ENCODE measurements at regions of chr9 and their contacts with region 1.

Region 1: DNA sequence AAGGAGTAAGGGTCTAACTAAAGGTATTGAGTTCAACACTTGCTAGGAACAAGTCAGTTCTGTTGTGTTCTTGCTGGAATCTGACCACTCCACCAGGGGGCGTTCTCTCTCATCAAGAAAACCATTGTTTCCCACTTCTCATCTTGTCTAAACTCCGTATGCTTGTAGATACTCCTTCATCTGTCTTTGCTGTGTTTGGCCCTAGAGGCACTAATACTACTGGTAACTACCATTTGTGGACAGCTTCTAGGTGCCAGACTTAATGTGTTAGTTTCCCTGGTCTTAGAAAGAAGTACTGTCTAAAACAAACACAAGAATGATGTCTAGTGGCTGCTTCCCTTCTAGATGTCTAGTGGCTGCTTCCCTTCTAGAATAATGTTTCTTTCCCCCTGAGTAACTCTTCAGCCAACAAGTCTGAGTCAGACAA is 18.7 kb upstream of the PTPDC1 start:
- DNase-seq: no peak
- H3K4me3 ChIP-seq: no peak overlapping the region
- CTCF ChIP-seq: peak; percentile 78

Region 2: DNA sequence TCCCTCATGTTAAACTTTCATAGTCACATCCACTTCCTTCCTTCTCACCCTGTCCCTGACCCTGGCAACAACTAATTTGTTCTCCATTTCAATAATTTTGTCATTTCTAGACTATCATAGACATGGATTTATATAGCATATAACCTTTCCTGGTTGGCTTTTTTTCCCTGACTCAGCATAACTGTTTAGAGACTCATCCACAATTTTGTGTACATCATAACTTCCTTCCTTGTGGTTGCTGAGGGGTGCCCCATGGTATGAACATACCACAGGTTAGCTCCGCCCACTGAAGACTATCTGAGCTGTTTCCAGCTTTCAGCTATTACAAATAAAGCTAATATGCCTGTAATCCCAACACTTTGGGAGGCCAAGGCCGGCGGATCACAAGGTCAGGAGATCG is 351.8 kb before region 1 on chr9:
- CTCF ChIA-PET with region 1: no interaction called
- POLR2A ChIA-PET with region 1: no interaction called
- DNase-seq: no peak
- H3K4me3 ChIP-seq: no peak overlapping the region
- CTCF ChIP-seq: no peak

Region 3: GRCh38 chr9:93898502-93899426 is 166.8 kb before region 1 on chr9:
- CTCF ChIA-PET with region 1: no interaction called
- POLR2A ChIA-PET with region 1: no interaction called
- DNase-seq: no peak
- H3K4me3 ChIP-seq: no peak overlapping the region
- CTCF ChIP-seq: no peak

Region 4: DNA sequence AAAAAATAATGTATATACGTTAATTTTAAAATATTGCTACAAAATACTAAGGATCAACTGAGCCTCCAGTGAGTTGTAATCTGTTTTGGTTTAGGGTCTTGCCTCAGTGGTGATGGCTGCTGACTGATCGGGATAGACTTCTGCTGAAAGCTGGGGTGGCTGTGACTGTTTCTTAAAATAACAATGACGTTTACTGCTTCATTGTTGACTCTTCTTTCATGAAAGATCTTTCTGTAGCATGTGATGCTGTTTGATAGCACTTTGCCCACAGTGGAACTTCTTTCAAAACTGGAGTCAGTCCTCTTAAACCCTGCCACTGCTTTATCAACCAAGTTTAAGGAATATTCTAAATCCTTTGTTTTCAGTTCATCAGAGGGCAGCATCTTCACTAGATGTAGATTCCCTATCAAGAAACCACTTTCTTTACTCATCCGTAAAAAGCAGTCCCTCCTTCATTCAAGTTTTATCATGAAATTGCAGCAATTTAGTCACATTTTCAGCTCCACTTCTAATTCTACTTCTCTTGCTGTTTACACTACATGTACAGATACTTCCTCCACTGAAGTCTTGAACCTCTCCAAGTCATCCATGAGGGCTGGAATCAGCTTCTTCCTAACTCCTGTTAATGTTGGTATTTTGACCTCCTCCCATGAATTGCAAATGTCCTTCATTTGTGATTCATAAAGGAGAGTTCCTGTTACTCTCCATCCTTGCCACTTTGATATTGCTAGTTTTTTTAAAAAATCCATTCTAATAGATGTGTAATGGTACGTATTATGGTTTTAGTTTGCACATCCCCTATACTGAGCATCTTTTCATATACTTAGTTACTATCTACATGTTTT is 22.8 kb before region 1 on chr9:
- CTCF ChIA-PET with region 1: interaction called, 22 read pairs
- POLR2A ChIA-PET with region 1: no interaction called
- DNase-seq: no peak
- H3K4me3 ChIP-seq: no peak overlapping the region
- CTCF ChIP-seq: no peak

Region 5: DNA sequence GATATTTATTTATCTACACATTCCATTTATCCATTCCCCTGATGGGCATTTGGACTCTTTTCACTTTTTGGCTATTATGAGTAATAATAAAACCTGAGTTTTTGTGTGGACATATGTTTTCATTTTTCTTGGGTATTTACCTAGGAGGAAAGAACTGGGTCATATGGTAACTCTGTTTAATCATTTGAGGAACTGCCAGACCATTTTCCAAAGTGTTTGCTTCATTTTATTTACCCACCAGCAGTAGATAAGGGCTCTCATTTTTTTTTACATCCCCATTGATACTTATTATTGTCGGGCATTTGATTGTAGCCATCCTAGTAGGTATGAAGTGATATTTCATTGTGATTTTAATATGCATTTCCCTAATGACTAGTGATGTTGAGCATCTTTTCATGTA is 11.0 kb after region 1 on chr9:
- CTCF ChIA-PET with region 1: interaction called, 39 read pairs
- POLR2A ChIA-PET with region 1: no interaction called
- DNase-seq: no peak
- H3K4me3 ChIP-seq: no peak overlapping the region
- CTCF ChIP-seq: no peak

Region 6: GRCh38 chr9:94084314-94084713 is 18.8 kb after region 1 on chr9 and contains the start of gene PTPDC1:
- CTCF ChIA-PET with region 1: interaction called, 25 read pairs
- POLR2A ChIA-PET with region 1: no interaction called
- DNase-seq: peak; percentile 37
- H3K4me3 ChIP-seq: peak within 1 kb of the TSS; percentile 3; the same call in 1 of the 2 replicates
- CTCF ChIP-seq: no peak

Region 7: DNA sequence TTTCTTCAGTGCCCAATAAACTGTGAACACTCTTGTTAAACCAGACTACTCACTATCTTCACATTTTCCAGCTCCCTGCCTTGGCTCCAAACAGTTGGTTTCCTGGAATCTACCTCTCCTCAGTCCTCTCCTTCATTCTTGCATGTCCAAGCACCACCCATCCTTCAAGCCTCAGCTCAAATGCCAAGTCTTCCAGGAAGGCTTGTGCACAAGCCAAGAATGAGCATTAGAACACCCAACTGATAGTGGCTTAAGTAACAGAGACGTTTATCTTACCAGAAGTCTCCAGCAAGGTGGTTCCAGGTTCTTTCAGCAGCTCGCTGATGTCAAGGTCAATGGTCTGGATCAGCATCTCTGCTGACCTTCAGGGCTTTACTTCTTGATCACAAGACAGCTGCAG is 78.8 kb after region 1 on chr9:
- CTCF ChIA-PET with region 1: no interaction called
- POLR2A ChIA-PET with region 1: no interaction called
- DNase-seq: no peak
- H3K4me3 ChIP-seq: no peak overlapping the region
- CTCF ChIP-seq: no peak

Region 8: DNA sequence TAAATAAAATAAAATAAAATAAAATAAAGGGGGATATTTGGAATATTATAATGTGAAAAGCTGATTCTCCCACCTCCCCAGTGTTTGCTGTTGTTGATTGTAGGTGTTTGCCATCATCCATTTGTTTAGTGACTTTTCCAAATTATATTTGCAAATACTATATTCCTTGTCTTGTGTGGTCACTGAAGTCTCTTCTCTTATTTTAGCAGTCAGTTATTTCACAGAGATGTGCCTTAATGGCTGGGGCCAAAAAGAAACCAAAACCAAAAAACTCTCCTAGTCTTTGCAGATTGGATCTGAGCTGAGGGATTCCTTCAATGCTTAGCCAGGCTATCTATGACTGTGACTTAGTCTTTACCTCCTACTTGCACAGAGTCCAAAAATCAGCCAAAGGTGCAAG is 122.7 kb after region 1 on chr9:
- CTCF ChIA-PET with region 1: interaction called, 12 read pairs
- POLR2A ChIA-PET with region 1: no interaction called
- DNase-seq: no peak
- H3K4me3 ChIP-seq: no peak overlapping the region
- CTCF ChIP-seq: no peak

Measured in AG04449 (cell line).